ENCODE measurements at regions of chr10 and their contacts with region 1.

Region 1: DNA sequence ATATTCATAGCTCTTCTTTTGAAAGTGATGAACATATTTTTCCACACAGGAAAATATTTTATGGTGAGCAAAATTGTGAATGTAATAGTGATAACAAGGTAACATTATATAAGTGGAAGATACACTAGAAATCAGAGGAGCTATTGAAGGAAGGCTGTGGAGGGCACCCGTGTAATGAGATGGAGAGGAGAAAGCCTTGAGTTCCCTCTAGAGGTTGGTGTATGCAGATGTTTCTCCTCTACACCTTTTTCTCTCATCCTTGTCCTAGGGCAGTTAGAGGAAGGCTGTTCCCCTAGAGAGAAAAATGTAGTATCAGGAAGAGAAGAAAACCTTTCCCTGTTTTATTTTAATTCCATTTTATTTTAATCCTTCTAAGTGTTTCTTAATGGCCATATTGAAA is 54.6 kb upstream of the NRG3 start:
- DNase-seq: no peak
- H3K4me3 ChIP-seq: no peak overlapping the region
- H3K27ac ChIP-seq: no peak overlapping the region
- H3K4me1 ChIP-seq: no peaks in the 10 kb centered on the region
- H3K27me3 ChIP-seq: no peaks in the 10 kb centered on the region
- CTCF ChIP-seq: peak in 2 of 3 experiments; percentile 62 to 75; a peak in 3 of 4 replicates
- EP300 ChIP-seq: no peak
- POLR2A ChIP-seq: no peak
- RAD21 ChIP-seq: peak; percentile 92 to 95

Region 2: DNA sequence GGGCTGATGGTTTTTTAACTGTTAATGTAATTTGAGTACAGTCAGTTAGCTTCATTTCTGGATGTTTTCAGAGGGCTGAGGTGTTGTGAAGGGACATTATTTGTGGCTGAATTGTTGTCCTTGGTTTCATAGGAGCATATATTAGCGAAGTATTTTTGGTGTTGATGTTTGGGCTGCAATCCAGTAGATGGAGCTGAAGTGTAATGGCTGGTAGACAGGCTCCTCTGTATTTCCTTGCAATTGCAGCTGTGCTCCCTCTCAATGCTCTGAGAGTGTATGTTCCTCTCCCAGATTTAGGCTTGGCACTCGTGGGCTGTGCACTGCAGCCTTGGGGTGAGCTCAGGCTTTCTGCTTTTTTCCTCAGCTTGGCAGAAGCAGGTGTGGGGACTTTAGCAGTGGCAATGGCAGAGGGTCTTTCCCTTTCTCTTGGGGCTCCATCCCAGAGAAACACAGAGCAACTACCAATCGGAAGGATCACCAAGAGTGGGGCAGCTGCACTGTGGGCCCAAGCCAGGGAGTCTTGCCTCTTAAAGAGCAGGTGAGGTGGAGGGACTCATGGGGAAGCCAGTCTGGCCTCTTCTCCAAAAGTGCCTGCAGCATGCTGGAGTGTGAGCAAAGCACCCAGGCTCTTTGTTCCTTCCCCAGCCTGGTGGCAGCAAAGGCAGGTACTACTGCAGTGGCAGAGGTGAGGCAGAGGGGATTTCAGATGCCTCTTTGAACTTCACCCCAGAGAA is 738.4 kb before region 1 on chr10:
- CTCF ChIA-PET with region 1: interaction called, 13 read pairs
- POLR2A ChIA-PET with region 1: no interaction called
- DNase-seq: peak in 1 of 2 experiments; percentile 48
- H3K4me3 ChIP-seq: no peak overlapping the region
- H3K27ac ChIP-seq: no peak overlapping the region
- H3K4me1 ChIP-seq: peaks cover 0 to 3% (median 0%) of the 10 kb centered on the region in 4 experiments; a peak in 1 of 7 replicates
- H3K27me3 ChIP-seq: no peaks in the 10 kb centered on the region
- CTCF ChIP-seq: peak in 2 of 3 experiments; percentile 60 to 76; a peak in 2 of 4 replicates
- EP300 ChIP-seq: no peak
- POLR2A ChIP-seq: no peak
- RAD21 ChIP-seq: peak; percentile 87 to 94

Region 3: DNA sequence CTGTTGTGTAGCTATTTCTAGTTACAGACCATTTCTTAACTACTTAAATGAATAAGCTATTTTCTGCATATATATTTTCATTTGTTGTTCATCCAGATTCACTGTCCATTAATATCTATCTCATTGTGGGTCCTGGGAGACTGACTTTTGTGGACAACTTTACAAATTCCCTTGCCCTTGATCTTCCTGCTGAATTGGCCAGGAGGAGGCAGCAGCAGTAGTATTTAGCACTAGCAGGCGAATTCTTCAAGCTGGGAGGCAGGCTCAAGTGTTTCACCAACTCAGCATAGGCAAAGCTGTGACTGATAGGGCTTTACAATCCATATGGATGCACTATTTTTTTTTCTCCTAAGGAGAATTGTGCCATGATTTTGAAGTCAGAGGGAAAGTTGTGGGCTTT is 406.4 kb before region 1 on chr10:
- CTCF ChIA-PET with region 1: interaction called, 29 read pairs
- POLR2A ChIA-PET with region 1: no interaction called
- DNase-seq: peak in 1 of 2 experiments; percentile 31
- H3K4me3 ChIP-seq: no peak overlapping the region
- H3K27ac ChIP-seq: no peak overlapping the region
- H3K4me1 ChIP-seq: no peaks in the 10 kb centered on the region
- H3K27me3 ChIP-seq: no peaks in the 10 kb centered on the region
- CTCF ChIP-seq: peak; percentile 31 to 82 (median 72)
- EP300 ChIP-seq: no peak
- POLR2A ChIP-seq: no peak
- RAD21 ChIP-seq: peak; percentile 80 to 83

Region 4: GRCh38 chr10:81806842-81807241 is 13.6 kb before region 1 on chr10:
- CTCF ChIA-PET with region 1: no interaction called
- POLR2A ChIA-PET with region 1: no interaction called
- DNase-seq: no peak
- H3K4me3 ChIP-seq: no peak overlapping the region
- H3K27ac ChIP-seq: no peak overlapping the region
- H3K4me1 ChIP-seq: no peaks in the 10 kb centered on the region
- H3K27me3 ChIP-seq: no peaks in the 10 kb centered on the region
- CTCF ChIP-seq: no peak
- EP300 ChIP-seq: no peak
- POLR2A ChIP-seq: no peak
- RAD21 ChIP-seq: no peak